HEK293T (cell line): ENCODE measurements at regions of chr19 and their contacts with region 1.

Region 1: GRCh38 chr19:40465557-40466150 is at the start of gene BLVRB:
- DNase-seq: peak; percentile 99

Region 2: DNA sequence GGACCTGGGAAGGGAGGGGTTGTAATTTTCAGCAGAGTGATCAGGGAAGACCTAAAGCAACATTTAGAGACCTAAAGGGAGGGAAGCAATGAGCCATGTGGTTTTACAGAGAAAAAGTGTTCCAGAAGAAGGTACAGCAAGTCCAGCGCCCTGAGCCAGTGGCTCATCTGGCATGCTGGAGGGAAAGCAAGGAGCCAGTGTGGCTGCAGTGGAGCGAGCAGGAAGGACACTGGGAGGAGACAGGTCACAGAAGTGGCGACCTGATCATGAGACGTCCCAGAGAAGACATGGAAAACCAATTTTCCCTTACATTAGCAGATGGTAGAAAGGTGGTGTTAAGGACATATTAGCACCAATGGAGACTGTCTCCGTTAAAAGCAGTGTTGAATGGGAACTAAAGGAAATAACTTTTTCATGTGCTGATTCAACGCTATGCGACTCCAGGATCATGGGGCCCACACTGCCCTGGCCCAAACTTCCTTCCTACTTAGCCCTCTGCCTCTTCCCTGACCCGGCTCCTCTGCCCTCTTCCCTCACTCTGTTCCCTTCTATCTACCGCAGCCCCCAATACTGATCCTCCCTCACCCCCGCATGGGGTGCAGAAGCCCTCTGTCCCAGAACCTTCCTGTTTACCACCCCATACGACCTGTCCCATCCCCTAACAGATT is 122.9 kb before region 1 on chr19:
- CTCF ChIA-PET with region 1: no interaction called
- POLR2A ChIA-PET with region 1: no interaction called
- DNase-seq: no peak

Region 3: DNA sequence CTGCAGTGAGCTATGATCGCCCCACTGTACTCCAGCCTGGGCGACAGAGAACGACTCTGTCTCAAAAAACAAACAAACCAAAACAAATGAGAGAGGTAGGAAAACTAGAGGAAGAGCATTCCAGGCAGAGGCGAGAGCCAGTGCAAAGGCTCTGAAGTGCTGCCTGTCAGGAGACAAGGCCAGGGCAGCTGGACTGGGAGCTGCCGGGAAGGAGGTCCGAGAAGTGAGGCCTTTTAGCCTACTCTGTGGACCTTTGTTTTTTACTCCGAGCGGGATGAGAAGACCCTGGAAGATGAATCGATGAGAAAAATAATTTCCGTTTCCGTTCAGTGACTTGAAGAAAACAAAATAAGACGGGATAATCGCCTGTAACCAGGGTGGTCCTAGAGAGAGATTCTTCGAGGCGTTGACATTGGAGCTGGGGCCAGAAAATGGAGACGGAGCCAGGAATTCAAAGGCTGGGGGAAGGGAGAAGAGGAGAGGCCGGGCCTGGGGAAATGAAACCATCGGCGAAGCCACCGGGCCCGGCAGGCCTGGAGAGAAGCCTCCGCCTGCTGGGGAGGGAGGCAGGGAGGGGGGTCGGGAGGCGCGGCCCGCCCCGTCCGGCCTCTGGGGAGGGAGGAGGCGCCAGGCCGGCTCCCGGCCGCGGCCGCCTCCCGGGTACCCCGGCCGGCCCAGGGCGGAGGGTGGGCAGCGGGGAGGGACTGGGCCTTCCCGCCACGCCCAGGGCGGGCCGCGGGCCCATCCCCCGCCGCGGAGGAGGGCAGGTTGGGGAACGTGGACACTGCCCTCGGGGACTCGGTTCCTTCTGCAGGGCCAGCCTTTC is 32.0 kb before region 1 on chr19:
- CTCF ChIA-PET with region 1: interaction called, 3 read pairs
- POLR2A ChIA-PET with region 1: interaction called, 11 read pairs
- DNase-seq: peak; percentile 79